Activated CD4-positive, alpha-beta T cell treated with anti-CD3 and anti-CD28 coated beads for 36 hours (primary cell): ENCODE measurements at regions of chr13 and their contacts with region 1.

Region 1: GRCh38 chr13:20197361-20197834 is 4.7 kb upstream of the GJB2 start:
- DNase-seq: peak; percentile 41
- ATAC-seq: peak; percentile 41
- H3K4me3 Mint-ChIP-seq: no peak overlapping the region
- H3K27ac Mint-ChIP-seq: no peak overlapping the region
- H3K4me1 Mint-ChIP-seq: peaks cover 21% of the 10 kb centered on the region
- H3K27me3 Mint-ChIP-seq: peaks cover 28% of the 10 kb centered on the region

Region 2: GRCh38 chr13:20165417-20166257 is 31.8 kb before region 1 on chr13:
- CTCF ChIA-PET with region 1: no interaction called
- POLR2A ChIA-PET with region 1: no interaction called
- intact Hi-C with region 1: no loop called
- DNase-seq: no peak
- ATAC-seq: no peak
- H3K4me3 Mint-ChIP-seq: no peak overlapping the region
- H3K27ac Mint-ChIP-seq: no peak overlapping the region
- H3K4me1 Mint-ChIP-seq: peaks cover 6% of the 10 kb centered on the region
- H3K27me3 Mint-ChIP-seq: peaks cover 42% of the 10 kb centered on the region

Region 3: GRCh38 chr13:20209948-20210347 is 12.6 kb after region 1 on chr13:
- CTCF ChIA-PET with region 1: interaction called, 10 read pairs
- POLR2A ChIA-PET with region 1: no interaction called
- intact Hi-C with region 1: no loop called
- DNase-seq: no peak
- ATAC-seq: no peak
- H3K4me3 Mint-ChIP-seq: no peak overlapping the region
- H3K27ac Mint-ChIP-seq: no peak overlapping the region
- H3K4me1 Mint-ChIP-seq: no peaks in the 10 kb centered on the region
- H3K27me3 Mint-ChIP-seq: peaks cover 6% of the 10 kb centered on the region

Region 4: GRCh38 chr13:20294497-20294896 is 97.1 kb after region 1 on chr13:
- CTCF ChIA-PET with region 1: interaction called, 4 read pairs
- POLR2A ChIA-PET with region 1: no interaction called
- intact Hi-C with region 1: loop called in 1 of 2 experiments (anchors 5 kb)
- DNase-seq: no peak
- ATAC-seq: no peak
- H3K4me3 Mint-ChIP-seq: no peak overlapping the region
- H3K27ac Mint-ChIP-seq: no peak overlapping the region
- H3K4me1 Mint-ChIP-seq: no peaks in the 10 kb centered on the region
- H3K27me3 Mint-ChIP-seq: no peaks in the 10 kb centered on the region

Region 5: DNA sequence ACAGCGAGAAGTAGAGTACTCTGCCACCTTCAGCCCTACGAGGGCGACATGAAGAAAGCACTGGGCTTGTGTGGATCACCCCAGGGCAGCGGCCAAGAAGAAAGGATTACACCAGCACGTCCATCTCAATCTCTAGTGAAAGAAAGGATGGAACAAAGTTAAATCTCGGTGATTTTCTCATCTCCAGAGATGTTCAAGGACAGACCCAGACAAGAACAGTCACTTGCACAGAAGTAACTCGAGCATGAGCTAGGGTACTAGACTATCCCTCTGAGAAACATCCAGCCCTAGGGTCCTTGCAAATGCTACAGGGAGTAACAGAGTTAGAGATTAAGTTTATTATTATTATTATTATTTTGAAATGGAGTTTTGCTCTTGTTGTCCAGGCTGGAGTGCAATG is 221.6 kb after region 1 on chr13:
- CTCF ChIA-PET with region 1: interaction called, 4 read pairs
- POLR2A ChIA-PET with region 1: no interaction called
- intact Hi-C with region 1: loop called (anchors 1 to 5 kb)
- DNase-seq: no peak
- ATAC-seq: no peak
- H3K4me3 Mint-ChIP-seq: no peak overlapping the region
- H3K27ac Mint-ChIP-seq: peak overlapping the region; percentile 2
- H3K4me1 Mint-ChIP-seq: peaks cover 46% of the 10 kb centered on the region
- H3K27me3 Mint-ChIP-seq: peaks cover 5% of the 10 kb centered on the region

Region 6: GRCh38 chr13:20431080-20431479 is 233.7 kb after region 1 on chr13:
- CTCF ChIA-PET with region 1: no interaction called
- POLR2A ChIA-PET with region 1: no interaction called
- intact Hi-C with region 1: no loop called
- DNase-seq: no peak
- ATAC-seq: no peak
- H3K4me3 Mint-ChIP-seq: no peak overlapping the region
- H3K27ac Mint-ChIP-seq: no peak overlapping the region
- H3K4me1 Mint-ChIP-seq: peaks cover 35% of the 10 kb centered on the region
- H3K27me3 Mint-ChIP-seq: no peaks in the 10 kb centered on the region

Region 7: DNA sequence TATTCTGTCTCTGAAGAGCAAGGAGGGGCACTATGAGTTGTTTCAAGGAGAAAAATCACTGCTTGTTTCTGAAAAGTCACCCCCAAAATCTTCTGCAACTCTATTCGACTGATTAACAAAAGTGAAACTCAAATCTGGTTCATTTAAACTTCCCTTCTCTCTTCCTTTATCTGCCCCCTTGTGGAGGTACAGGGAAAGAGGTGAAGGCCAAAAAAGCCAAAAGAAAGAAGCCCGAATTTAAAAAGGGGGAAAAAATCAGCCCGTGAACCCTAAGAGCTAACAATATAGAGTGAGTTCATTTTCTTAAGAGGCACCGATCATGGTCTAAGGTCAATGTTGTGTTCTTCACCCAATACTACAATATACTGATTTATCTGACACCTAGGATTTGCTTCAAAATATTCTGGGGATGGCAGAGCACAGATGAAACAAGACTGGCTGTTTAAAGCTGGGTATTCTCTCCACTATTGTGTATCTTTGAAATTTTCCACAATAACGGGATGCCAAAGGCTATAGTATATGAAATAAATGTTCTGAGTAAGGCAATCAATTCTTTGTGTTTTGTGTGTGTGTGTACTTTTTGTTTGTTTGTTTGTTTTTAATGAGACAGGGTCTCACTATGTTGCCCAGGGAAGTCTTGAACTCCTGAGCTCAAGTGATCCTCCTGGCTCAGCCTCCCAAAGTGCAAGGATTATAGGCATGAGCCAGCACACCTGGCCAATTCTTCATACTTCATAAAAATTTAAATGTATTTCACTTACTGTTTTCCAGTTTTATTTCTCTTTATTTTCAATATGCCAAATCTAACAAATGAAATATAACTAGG is 631.4 kb after region 1 on chr13:
- CTCF ChIA-PET with region 1: no interaction called
- POLR2A ChIA-PET with region 1: no interaction called
- intact Hi-C with region 1: loop called in 1 of 2 experiments (anchors 5 kb)
- DNase-seq: peak; percentile 36
- ATAC-seq: peak; percentile 72
- H3K4me3 Mint-ChIP-seq: no peak overlapping the region
- H3K27ac Mint-ChIP-seq: no peak overlapping the region
- H3K4me1 Mint-ChIP-seq: peaks cover 6% of the 10 kb centered on the region
- H3K27me3 Mint-ChIP-seq: no peaks in the 10 kb centered on the region